CD4-positive, alpha-beta T cell (primary cell): ENCODE measurements at regions of chr6 and their contacts with region 1.

Region 1: DNA sequence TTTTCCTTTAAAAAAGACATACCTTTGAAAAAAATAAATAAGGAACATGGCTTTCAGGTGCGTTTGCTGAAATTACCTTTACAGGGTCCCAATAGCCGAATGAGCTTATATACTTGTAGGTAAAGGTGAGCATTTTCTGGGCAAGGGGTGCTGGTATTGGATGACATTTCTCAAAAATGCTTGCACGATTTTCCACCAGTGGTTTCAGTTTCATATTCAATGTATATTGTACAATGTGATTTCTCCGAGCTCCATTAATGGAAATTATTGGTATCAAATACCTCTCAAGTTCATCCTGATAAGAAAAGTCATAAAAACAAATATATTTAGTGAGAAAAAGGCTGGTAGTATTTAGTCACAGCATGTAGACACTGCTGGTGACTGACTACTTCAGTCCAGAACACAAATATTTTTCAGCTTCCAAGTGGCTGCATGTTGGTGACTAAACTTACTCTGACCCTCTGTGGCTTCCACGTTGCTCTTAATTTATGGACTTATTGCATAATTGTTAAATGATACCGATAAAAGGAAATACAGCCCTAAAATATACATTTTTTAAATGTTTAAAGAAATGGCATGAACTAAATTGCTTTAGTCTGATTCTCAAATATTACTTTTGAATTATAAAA is 32.9 kb upstream of the ZBTB24 start:
- DNase-seq: peak in 3 of 14 experiments; percentile 32 to 52 (median 35)
- ATAC-seq: no peak
- H3K4me3 ChIP-seq: peak overlapping the region; percentile 43
- H3K4me3 Mint-ChIP-seq: peak overlapping the region; percentile 75
- H3K27ac ChIP-seq: no peak overlapping the region
- H3K27ac Mint-ChIP-seq: peak overlapping the region; percentile 2
- H3K4me1 ChIP-seq: peaks cover 7% of the 10 kb centered on the region
- H3K4me1 Mint-ChIP-seq: peaks cover 36% of the 10 kb centered on the region
- H3K27me3 ChIP-seq: no peaks in the 10 kb centered on the region
- H3K27me3 Mint-ChIP-seq: no peaks in the 10 kb centered on the region
- CTCF ChIP-seq: no peak

Region 2: GRCh38 chr6:108403236-108403635 is 1112.7 kb before region 1 on chr6:
- CTCF ChIA-PET with region 1: no interaction called
- POLR2A ChIA-PET with region 1: no interaction called
- intact Hi-C with region 1: no loop called
- DNase-seq: no peak
- ATAC-seq: no peak
- H3K4me3 ChIP-seq: no peak overlapping the region
- H3K4me3 Mint-ChIP-seq: no peak overlapping the region
- H3K27ac ChIP-seq: no peak overlapping the region
- H3K27ac Mint-ChIP-seq: no peak overlapping the region
- H3K4me1 ChIP-seq: no peaks in the 10 kb centered on the region
- H3K4me1 Mint-ChIP-seq: no peaks in the 10 kb centered on the region
- H3K27me3 ChIP-seq: no peaks in the 10 kb centered on the region
- H3K27me3 Mint-ChIP-seq: no peaks in the 10 kb centered on the region
- CTCF ChIP-seq: no peak

Region 3: DNA sequence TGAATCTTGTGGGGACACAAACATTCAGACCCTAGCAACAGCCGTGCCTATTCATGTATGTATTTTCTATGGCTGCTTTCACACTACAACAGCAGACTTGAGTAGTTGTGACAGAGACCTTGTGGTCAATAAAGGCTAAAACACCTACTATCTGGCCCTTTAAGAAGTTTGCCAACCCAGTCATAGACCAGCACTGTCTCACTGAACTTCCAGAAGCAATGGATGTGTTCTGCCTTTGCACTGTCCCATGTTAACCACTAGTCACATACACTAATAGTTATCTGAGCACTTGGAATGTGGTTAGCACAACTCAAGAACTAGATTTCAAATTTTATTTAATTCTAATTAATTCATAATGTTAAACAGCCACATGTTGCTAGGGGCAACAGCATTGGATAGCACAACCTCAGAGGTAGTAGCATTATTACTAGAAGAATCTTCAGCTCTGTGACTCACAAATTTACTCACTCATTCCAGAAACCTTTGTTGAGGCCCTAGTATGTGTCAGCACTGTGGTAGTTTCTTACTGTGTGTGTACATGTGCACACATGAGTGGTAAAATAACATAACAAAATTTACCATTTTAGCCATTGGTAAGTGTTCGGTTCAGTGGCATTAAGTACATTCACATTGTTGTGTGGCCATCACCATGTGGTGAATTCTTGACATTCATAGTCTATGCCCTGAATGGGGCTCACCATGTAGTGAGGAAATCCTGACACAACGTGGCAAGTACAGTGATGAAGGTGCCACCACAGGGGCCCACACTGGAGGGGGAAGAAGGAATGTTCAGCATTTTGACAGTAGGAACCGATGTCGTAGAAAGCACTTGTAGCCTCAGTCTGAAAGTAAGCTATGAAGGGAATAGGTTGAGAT is 313.2 kb before region 1 on chr6:
- CTCF ChIA-PET with region 1: no interaction called
- POLR2A ChIA-PET with region 1: no interaction called
- intact Hi-C with region 1: no loop called
- DNase-seq: no peak
- ATAC-seq: no peak
- H3K4me3 ChIP-seq: no peak overlapping the region
- H3K4me3 Mint-ChIP-seq: no peak overlapping the region
- H3K27ac ChIP-seq: no peak overlapping the region
- H3K27ac Mint-ChIP-seq: no peak overlapping the region
- H3K4me1 ChIP-seq: no peaks in the 10 kb centered on the region
- H3K4me1 Mint-ChIP-seq: no peaks in the 10 kb centered on the region
- H3K27me3 ChIP-seq: no peaks in the 10 kb centered on the region
- H3K27me3 Mint-ChIP-seq: no peaks in the 10 kb centered on the region
- CTCF ChIP-seq: no peak

Region 4: DNA sequence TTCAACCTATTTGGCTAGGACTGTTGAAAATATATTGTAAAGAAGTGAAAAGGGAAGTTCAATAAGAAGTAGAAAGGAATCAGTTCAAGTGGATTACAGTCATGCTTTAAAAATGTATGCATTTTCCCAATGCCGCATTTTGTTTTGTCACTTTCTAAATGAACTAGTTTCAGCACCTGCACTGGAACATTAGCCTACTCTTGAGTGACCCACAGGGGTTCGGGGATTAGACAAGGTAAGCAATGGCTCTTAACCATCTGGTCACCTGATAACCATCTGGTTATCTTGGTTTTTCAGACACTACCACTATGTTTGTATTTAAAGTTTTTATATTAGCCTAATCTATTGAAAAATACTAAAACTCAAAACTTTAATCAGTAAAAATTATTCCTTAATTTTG is 231.2 kb before region 1 on chr6:
- CTCF ChIA-PET with region 1: no interaction called
- POLR2A ChIA-PET with region 1: no interaction called
- intact Hi-C with region 1: no loop called
- DNase-seq: no peak
- ATAC-seq: no peak
- H3K4me3 ChIP-seq: no peak overlapping the region
- H3K4me3 Mint-ChIP-seq: no peak overlapping the region
- H3K27ac ChIP-seq: no peak overlapping the region
- H3K27ac Mint-ChIP-seq: no peak overlapping the region
- H3K4me1 ChIP-seq: no peaks in the 10 kb centered on the region
- H3K4me1 Mint-ChIP-seq: no peaks in the 10 kb centered on the region
- H3K27me3 ChIP-seq: no peaks in the 10 kb centered on the region
- H3K27me3 Mint-ChIP-seq: no peaks in the 10 kb centered on the region
- CTCF ChIP-seq: no peak

Region 5: GRCh38 chr6:109420796-109421583 is 94.9 kb before region 1 on chr6:
- CTCF ChIA-PET with region 1: no interaction called
- POLR2A ChIA-PET with region 1: no interaction called
- intact Hi-C with region 1: no loop called
- DNase-seq: no peak
- ATAC-seq: no peak
- H3K4me3 ChIP-seq: no peak overlapping the region
- H3K4me3 Mint-ChIP-seq: no peak overlapping the region
- H3K27ac ChIP-seq: no peak overlapping the region
- H3K27ac Mint-ChIP-seq: no peak overlapping the region
- H3K4me1 ChIP-seq: no peaks in the 10 kb centered on the region
- H3K4me1 Mint-ChIP-seq: no peaks in the 10 kb centered on the region
- H3K27me3 ChIP-seq: no peaks in the 10 kb centered on the region
- H3K27me3 Mint-ChIP-seq: no peaks in the 10 kb centered on the region
- CTCF ChIP-seq: no peak

Region 6: GRCh38 chr6:109491207-109491938 is 24.5 kb before region 1 on chr6:
- CTCF ChIA-PET with region 1: no interaction called
- POLR2A ChIA-PET with region 1: interaction called, 12 read pairs
- intact Hi-C with region 1: no loop called
- DNase-seq: peak in 4 of 14 experiments; percentile 37 to 68 (median 57)
- ATAC-seq: peak; percentile 98
- H3K4me3 ChIP-seq: no peak overlapping the region
- H3K4me3 Mint-ChIP-seq: peak overlapping the region; percentile 22
- H3K27ac ChIP-seq: peak overlapping the region in 1 of 2 donors; percentile 51
- H3K27ac Mint-ChIP-seq: peak overlapping the region; percentile 38
- H3K4me1 ChIP-seq: peaks cover 24% of the 10 kb centered on the region
- H3K4me1 Mint-ChIP-seq: peaks cover 17% of the 10 kb centered on the region
- H3K27me3 ChIP-seq: no peaks in the 10 kb centered on the region
- H3K27me3 Mint-ChIP-seq: no peaks in the 10 kb centered on the region
- CTCF ChIP-seq: no peak